Activated CD8-positive, alpha-beta T cell treated with anti-CD3 and anti-CD28 coated beads for 36 hours (primary cell): ENCODE measurements at regions of chr3 and their contacts with region 1.

Region 1: GRCh38 chr3:123066896-123067688 is at the start of gene PDIA5:
- DNase-seq: peak; percentile 83
- ATAC-seq: peak; percentile 82
- H3K4me3 Mint-ChIP-seq: peak within 1 kb of the TSS; percentile 81
- H3K27ac Mint-ChIP-seq: peak within 1 kb of the TSS; percentile 35
- H3K4me1 Mint-ChIP-seq: peaks cover 36% of the 10 kb centered on the region
- H3K27me3 Mint-ChIP-seq: no peaks in the 10 kb centered on the region
- CTCF ChIP-seq: no peak
- total RNA-seq, gene PDIA5: 17.9 to 19.0 TPM

Region 2: DNA sequence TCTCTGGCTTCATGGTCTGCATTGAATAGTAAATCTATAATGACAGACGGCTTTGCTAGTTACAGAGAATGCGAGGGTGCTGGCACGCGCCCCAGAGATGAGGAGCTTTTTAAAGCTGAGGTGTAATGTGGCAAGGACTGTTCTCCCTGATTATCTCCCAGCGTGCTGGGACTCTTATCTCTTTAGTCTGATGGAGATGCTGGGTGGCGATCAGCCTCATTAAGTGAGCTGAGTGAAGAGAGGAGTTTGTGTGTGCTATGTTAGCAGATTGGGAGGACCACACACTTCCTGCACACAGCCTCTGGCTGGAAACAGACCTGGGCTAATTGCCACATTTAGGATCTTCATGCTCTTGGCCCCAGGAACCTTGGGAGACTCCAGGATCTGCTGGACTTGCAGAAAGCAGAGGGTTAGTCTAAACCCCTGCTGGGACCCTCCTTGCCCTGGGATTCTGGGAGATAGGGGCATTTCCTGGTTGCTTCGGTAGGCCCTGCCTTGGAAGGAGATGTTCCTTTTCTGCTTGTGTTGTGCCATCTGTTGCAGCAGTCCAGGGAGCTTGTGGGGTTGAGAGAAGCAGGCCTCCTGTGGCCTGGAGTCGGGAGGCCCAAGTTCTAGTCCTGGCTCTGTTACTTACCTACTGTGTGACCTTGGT is 14.8 kb after region 1 on chr3:
- CTCF ChIA-PET with region 1: interaction called, 5 read pairs
- POLR2A ChIA-PET with region 1: interaction called, 16 read pairs
- intact Hi-C with region 1: no loop called
- DNase-seq: no peak
- ATAC-seq: no peak
- H3K4me3 Mint-ChIP-seq: no peak overlapping the region
- H3K27ac Mint-ChIP-seq: no peak overlapping the region
- H3K4me1 Mint-ChIP-seq: peaks cover 45% of the 10 kb centered on the region
- H3K27me3 Mint-ChIP-seq: no peaks in the 10 kb centered on the region
- CTCF ChIP-seq: no peak